Mammary epithelial cell (primary cell): ENCODE measurements at regions of chr2 and their contacts with region 1.

Region 1: GRCh38 chr2:64750817-64751285 is 97.1 kb upstream of the SERTAD2 start:
- DNase-seq: peak; percentile 100
- H3K4me3 ChIP-seq: peak overlapping the region; percentile 77 to 86 (median 86)
- H3K27ac ChIP-seq: peak overlapping the region; percentile 79
- H3K4me1 ChIP-seq: peaks cover 28% of the 10 kb centered on the region
- H3K27me3 ChIP-seq: no peaks in the 10 kb centered on the region
- CTCF ChIP-seq: peak in 1 of 2 donors; percentile 18

Region 2: DNA sequence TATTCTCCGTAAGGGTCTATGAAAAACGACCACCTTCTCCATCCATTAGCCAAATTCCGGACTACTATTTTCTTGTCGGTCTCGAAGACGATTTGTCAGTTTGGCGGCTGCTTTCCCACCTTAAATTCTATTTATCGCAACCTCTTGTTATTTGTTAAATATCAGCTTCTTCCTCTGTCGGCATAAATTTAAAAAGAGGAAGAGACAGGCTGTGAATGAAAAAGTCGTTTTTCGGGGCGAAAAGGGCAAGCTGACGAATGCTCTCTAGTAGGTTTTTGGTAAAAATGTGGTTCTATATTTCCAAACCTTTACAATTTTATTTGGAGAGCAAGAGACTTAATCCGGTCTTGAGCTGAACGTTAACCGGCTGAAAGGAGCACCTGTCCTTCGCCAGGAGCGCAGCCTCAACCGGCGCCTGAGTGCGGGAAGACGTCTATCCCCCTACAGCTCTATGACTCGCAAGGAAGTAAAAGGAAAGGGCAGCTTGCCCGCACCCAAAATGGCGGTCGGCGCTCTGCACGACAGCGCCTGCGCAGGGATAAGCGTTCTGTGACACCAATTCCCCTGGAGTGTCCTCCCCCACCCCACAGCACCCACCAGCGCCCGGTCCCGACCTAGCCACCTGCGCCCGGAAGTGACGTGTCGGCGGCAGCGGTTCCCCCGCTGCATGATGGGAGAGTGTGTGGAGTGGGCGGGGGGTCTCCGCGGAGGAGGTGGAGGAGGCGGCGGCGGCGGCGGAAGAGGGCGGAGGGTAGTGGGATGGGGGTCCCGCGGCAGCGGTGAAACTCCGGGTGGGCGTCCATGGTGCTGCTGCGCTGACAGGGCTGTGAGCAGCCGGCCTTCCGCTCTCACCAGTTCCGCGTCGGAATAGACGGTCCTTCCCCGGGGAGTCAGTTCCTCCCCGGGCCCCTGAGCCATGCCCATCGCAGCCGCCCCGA is 226.9 kb before region 1 on chr2 and contains the start of gene AFTPH:
- CTCF ChIA-PET with region 1: no interaction called
- dilution Hi-C with region 1: no loop called
- in situ Hi-C with region 1: no loop called
- intact Hi-C with region 1: loop called (anchors 1 kb)
- DNase-seq: peak; percentile 99
- H3K4me3 ChIP-seq: peak within 1 kb of the TSS; percentile 79 to 93 (median 83)
- H3K27ac ChIP-seq: peak within 1 kb of the TSS; percentile 83
- H3K4me1 ChIP-seq: peaks cover 3% of the 10 kb centered on the region
- H3K27me3 ChIP-seq: no peaks in the 10 kb centered on the region
- CTCF ChIP-seq: no peak
- total RNA-seq, gene AFTPH: 20.7 to 34.5 TPM

Region 3: GRCh38 chr2:64644177-64645004 is 106.5 kb before region 1 on chr2:
- CTCF ChIA-PET with region 1: interaction called, 5 read pairs
- dilution Hi-C with region 1: no loop called
- in situ Hi-C with region 1: loop called in 1 of 2 experiments (anchors 5 kb)
- intact Hi-C with region 1: loop called (anchors 1 kb)
- DNase-seq: peak; percentile 73
- H3K4me3 ChIP-seq: peak overlapping the region; percentile 44 to 52 (median 48)
- H3K27ac ChIP-seq: peak overlapping the region; percentile 97
- H3K4me1 ChIP-seq: peaks cover 70% of the 10 kb centered on the region
- H3K27me3 ChIP-seq: no peaks in the 10 kb centered on the region
- CTCF ChIP-seq: no peak

Region 4: GRCh38 chr2:64730551-64731262 is 20.1 kb before region 1 on chr2:
- CTCF ChIA-PET with region 1: no interaction called
- dilution Hi-C with region 1: no loop called
- in situ Hi-C with region 1: no loop called
- intact Hi-C with region 1: loop called (anchors 2 kb)
- DNase-seq: peak; percentile 74
- H3K4me3 ChIP-seq: peak overlapping the region; percentile 22 to 35 (median 26)
- H3K27ac ChIP-seq: peak overlapping the region; percentile 31
- H3K4me1 ChIP-seq: peaks cover 14% of the 10 kb centered on the region
- H3K27me3 ChIP-seq: no peaks in the 10 kb centered on the region
- CTCF ChIP-seq: no peak

Region 5: DNA sequence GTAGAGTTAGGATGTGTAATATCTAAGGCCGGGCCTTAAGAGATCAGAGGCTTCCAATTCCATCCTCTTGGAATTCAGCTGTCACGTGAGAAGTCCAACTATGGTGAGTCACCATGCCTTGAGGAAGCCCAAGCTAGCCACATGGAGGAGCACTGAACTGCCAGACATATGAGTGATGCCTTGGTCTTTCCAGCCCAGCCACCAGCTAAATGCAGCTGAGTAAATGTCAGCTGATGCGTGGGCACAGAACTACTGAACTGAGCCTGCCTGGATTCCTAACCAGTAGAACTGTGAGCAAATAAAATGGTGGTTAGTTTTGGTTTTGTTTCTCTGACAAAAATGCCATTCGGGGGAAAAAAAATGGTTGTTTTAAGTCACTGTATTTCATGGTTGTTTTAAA is 56.6 kb after region 1 on chr2:
- CTCF ChIA-PET with region 1: interaction called, 13 read pairs
- dilution Hi-C with region 1: no loop called
- in situ Hi-C with region 1: no loop called
- intact Hi-C with region 1: no loop called
- DNase-seq: peak; percentile 98
- H3K4me3 ChIP-seq: no peak overlapping the region
- H3K27ac ChIP-seq: peak overlapping the region; percentile 63
- H3K4me1 ChIP-seq: peaks cover 19% of the 10 kb centered on the region
- H3K27me3 ChIP-seq: no peaks in the 10 kb centered on the region
- CTCF ChIP-seq: peak; percentile 19 to 43

Region 6: GRCh38 chr2:64859312-64860212 is 108.7 kb after region 1 on chr2:
- CTCF ChIA-PET with region 1: no interaction called
- dilution Hi-C with region 1: no loop called
- in situ Hi-C with region 1: loop called in 1 of 2 experiments (anchors 5 kb)
- intact Hi-C with region 1: no loop called
- DNase-seq: peak; percentile 79
- H3K4me3 ChIP-seq: peak overlapping the region in 1 of 3 experiments; percentile 3
- H3K27ac ChIP-seq: peak overlapping the region; percentile 24
- H3K4me1 ChIP-seq: peaks cover 27% of the 10 kb centered on the region
- H3K27me3 ChIP-seq: no peaks in the 10 kb centered on the region
- CTCF ChIP-seq: no peak

Region 7: DNA sequence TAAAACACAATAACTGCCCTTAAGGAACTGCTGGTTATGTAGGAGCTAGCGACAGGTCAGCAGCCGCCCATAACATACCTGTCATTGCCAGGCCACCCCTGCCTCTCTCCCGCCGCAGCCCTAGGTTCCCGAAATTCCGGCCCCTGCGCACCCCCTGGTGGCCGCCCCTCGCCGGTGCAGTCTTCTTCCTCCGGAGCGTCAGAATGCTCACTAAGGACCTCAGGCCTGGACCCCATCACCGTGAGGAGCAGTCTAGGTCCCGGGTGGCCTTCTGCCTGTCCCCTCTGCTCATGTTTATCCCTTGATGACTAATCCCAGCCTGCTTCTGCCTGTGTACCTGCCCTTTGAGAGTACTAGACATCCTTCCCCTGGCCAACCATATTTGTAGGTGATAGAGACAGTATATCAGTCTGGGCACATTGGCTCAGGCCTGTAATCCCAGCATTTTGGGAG is 122.6 kb after region 1 on chr2:
- CTCF ChIA-PET with region 1: no interaction called
- dilution Hi-C with region 1: no loop called
- in situ Hi-C with region 1: no loop called
- intact Hi-C with region 1: loop called (anchors 2 kb)
- DNase-seq: peak; percentile 36
- H3K4me3 ChIP-seq: peak overlapping the region in 1 of 3 experiments; percentile 11
- H3K27ac ChIP-seq: no peak overlapping the region
- H3K4me1 ChIP-seq: peaks cover 21% of the 10 kb centered on the region
- H3K27me3 ChIP-seq: no peaks in the 10 kb centered on the region
- CTCF ChIP-seq: peak; percentile 90 to 91